ENCODE measurements at regions of chr19 and their contacts with region 1.

Region 1: GRCh38 chr19:32405431-32406161 is at the start of gene DPY19L3:
- DNase-seq: peak; percentile 79 to 85 (median 83)
- H3K4me3 ChIP-seq: peak within 1 kb of the TSS; percentile 61 to 81
- H3K4me3 Mint-ChIP-seq: peak within 1 kb of the TSS; percentile 85 to 92 (median 88)
- H3K27ac ChIP-seq: peak within 1 kb of the TSS; percentile 50
- H3K27ac Mint-ChIP-seq: peak within 1 kb of the TSS; percentile 82 to 94 (median 90)
- H3K4me1 ChIP-seq: peaks cover 16% of the 10 kb centered on the region
- H3K4me1 Mint-ChIP-seq: peaks cover 5 to 19% (median 11%) of the 10 kb centered on the region in 4 donors
- H3K27me3 ChIP-seq: no peaks in the 10 kb centered on the region
- H3K27me3 Mint-ChIP-seq: no peaks in the 10 kb centered on the region
- total RNA-seq, gene DPY19L3: 16.9 to 17.9 TPM

Region 2: DNA sequence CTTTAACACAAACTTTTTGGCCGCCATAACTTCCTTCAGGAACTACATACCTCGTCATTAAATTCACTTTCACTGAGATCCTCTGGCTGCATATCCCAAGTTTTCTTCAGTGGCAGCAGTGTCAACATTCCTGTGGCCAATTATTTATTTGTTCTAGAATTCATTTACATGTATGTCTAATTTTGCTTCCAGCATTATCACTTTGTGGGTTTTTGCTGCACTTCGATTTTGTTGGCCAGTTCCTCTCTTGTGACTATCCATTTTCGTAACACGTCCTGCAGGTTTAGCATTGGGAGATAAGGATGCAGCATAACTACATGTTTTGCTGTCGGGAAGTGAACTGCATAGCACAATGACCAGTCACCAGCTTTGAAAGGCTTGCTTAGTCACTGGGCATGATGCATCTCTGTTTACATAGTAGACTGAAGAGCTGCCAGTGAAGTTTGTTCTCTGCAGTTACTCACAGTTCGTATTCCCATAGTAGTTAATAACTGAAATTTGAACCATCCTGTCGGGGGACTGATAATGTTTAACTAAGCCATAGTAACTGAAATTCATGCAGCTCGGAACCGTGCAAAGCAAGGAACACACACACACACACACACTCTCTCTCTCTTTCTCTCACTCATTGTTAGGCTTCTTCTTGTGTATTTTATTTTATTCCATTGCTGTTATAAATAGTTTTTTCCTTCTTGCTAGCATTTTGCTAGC is 31.9 kb before region 1 on chr19:
- CTCF ChIA-PET with region 1: no interaction called
- POLR2A ChIA-PET with region 1: no interaction called
- intact Hi-C with region 1: no loop called
- DNase-seq: no peak
- H3K4me3 ChIP-seq: no peak overlapping the region
- H3K4me3 Mint-ChIP-seq: no peak overlapping the region
- H3K27ac ChIP-seq: no peak overlapping the region
- H3K27ac Mint-ChIP-seq: no peak overlapping the region
- H3K4me1 ChIP-seq: peaks cover 3% of the 10 kb centered on the region
- H3K4me1 Mint-ChIP-seq: peaks cover 6 to 16% (median 12%) of the 10 kb centered on the region in 4 donors
- H3K27me3 ChIP-seq: no peaks in the 10 kb centered on the region
- H3K27me3 Mint-ChIP-seq: no peaks in the 10 kb centered on the region

Region 3: GRCh38 chr19:32570081-32570785 is 164.6 kb after region 1 on chr19:
- CTCF ChIA-PET with region 1: no interaction called
- POLR2A ChIA-PET with region 1: no interaction called
- intact Hi-C with region 1: no loop called
- DNase-seq: peak; percentile 49 to 68 (median 49)
- H3K4me3 ChIP-seq: no peak overlapping the region
- H3K4me3 Mint-ChIP-seq: peak overlapping the region in 4 of 8 donors; percentile 25 to 67 (median 50)
- H3K27ac ChIP-seq: no peak overlapping the region
- H3K27ac Mint-ChIP-seq: no peak overlapping the region
- H3K4me1 ChIP-seq: peaks cover 6% of the 10 kb centered on the region
- H3K4me1 Mint-ChIP-seq: peaks cover 8 to 17% (median 10%) of the 10 kb centered on the region in 4 donors
- H3K27me3 ChIP-seq: no peaks in the 10 kb centered on the region
- H3K27me3 Mint-ChIP-seq: peaks cover 12 to 13% of the 10 kb centered on the region in 2 donors

Region 4: GRCh38 chr19:32580901-32581703 is 175.5 kb after region 1 on chr19 and contains the start of gene PDCD5:
- CTCF ChIA-PET with region 1: no interaction called
- POLR2A ChIA-PET with region 1: interaction called, 10 read pairs
- intact Hi-C with region 1: loop called (anchors 2 kb)
- DNase-seq: peak; percentile 93 to 97 (median 94)
- H3K4me3 ChIP-seq: peak within 1 kb of the TSS; percentile 72 to 88
- H3K4me3 Mint-ChIP-seq: peak within 1 kb of the TSS; percentile 90 to 99 (median 96)
- H3K27ac ChIP-seq: peak within 1 kb of the TSS; percentile 74
- H3K27ac Mint-ChIP-seq: peak within 1 kb of the TSS; percentile 83 to 96 (median 92)
- H3K4me1 ChIP-seq: peaks cover 25% of the 10 kb centered on the region
- H3K4me1 Mint-ChIP-seq: peaks cover 18 to 39% (median 28%) of the 10 kb centered on the region in 4 donors
- H3K27me3 ChIP-seq: no peaks in the 10 kb centered on the region
- H3K27me3 Mint-ChIP-seq: peaks cover under 1% of the 10 kb centered on the region in 2 donors
- total RNA-seq, gene PDCD5: 61.1 to 67.4 TPM

Measured in CD4-positive, alpha-beta memory T cell (primary cell).